Caco-2 (cell line): ENCODE measurements at regions of chr3 and their contacts with region 1.

Region 1: GRCh38 chr3:122383771-122384697 is at the start of gene FAM162A:
- DNase-seq: peak; percentile 95 to 97
- H3K4me3 ChIP-seq: peak within 1 kb of the TSS; percentile 77
- H3K4me3 Mint-ChIP-seq: peak within 1 kb of the TSS; percentile 97
- H3K27ac Mint-ChIP-seq: peak within 1 kb of the TSS; percentile 95
- H3K4me1 ChIP-seq: peaks cover 7% of the 10 kb centered on the region; the same call in 1 of the 2 replicates
- H3K4me1 Mint-ChIP-seq: no peaks in the 10 kb centered on the region
- H3K27me3 ChIP-seq: no peaks in the 10 kb centered on the region
- H3K27me3 Mint-ChIP-seq: no peaks in the 10 kb centered on the region
- CTCF ChIP-seq: peak; percentile 42 to 74
- total RNA-seq, gene FAM162A: 35.8 and 37.4 TPM in 2 replicates

Region 2: DNA sequence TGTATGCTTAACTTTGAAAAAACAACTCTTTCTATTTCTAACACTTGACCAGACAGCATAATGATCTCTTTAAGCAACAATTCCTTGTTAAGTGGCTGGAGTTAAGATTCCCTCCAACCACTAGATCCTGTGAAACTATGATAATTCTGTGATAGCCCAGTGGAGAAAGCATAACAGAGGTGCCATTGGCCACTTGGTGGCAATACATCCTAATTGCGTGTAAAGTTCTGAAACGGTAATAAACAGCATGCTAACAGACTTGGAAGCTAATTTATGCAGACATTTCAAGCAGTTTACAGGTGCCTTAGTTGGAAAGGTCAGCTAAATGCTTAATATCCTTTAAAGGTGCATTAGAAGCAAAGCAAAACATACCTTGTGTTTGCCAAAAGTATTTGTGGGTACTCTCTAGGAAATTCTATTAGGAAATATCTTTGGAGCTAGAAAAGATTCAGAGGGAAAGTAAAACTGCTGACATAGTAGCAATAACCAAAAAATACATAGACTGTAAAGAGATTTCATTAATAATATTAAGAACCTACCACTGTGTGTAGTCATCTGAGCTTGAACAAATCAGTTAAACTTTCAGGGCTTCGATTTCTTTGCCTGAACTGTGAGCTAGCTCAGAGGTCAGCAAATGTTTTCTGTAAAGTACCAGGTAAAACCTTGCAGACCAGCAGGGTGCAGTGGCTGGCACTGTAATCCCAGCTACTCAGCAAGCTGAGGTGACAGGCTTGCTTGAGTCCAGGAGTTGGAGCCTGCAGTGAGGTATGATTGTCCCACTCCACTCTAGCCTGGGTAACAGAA is 78.0 kb before region 1 on chr3:
- CTCF ChIA-PET with region 1: interaction called, 24 read pairs
- POLR2A ChIA-PET with region 1: interaction called, 6 read pairs
- intact Hi-C with region 1: loop called (anchors 1 kb)
- DNase-seq: peak; percentile 43 to 48
- H3K4me3 ChIP-seq: no peak overlapping the region
- H3K4me3 Mint-ChIP-seq: peak overlapping the region; percentile 19
- H3K27ac Mint-ChIP-seq: no peak overlapping the region
- H3K4me1 ChIP-seq: 0 out of 2 replicates have a peak, but pooled peaks cover 2% of the 10 kb centered on the region
- H3K4me1 Mint-ChIP-seq: no peaks in the 10 kb centered on the region
- H3K27me3 ChIP-seq: no peaks in the 10 kb centered on the region
- H3K27me3 Mint-ChIP-seq: no peaks in the 10 kb centered on the region
- CTCF ChIP-seq: peak in 1 of 2 experiments; percentile 54

Region 3: DNA sequence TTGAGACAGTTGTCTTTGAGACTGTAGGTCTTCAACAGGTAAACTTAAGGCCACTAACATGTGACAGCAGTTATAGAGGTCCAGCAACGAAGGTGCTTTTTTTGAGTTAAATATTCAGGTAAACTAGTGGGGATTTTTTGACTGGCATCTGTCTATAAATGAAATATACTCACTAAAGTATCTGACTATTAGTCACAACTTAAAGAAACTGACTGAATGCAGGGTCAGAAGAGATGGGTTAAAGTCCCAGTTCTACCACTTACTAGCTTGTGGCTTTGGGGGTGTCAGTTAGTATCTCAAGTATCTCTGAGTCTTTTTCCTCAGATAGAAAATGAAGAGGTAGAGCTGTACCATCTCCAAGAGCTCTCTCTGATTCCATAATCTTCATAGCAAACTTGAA is 19.0 kb before region 1 on chr3:
- CTCF ChIA-PET with region 1: interaction called, 4 read pairs
- POLR2A ChIA-PET with region 1: interaction called, 6 read pairs
- intact Hi-C with region 1: loop called (anchors 1 kb)
- DNase-seq: no peak
- H3K4me3 ChIP-seq: no peak overlapping the region
- H3K4me3 Mint-ChIP-seq: peak overlapping the region; percentile 48
- H3K27ac Mint-ChIP-seq: peak overlapping the region; percentile 76
- H3K4me1 ChIP-seq: peaks cover 49% of the 10 kb centered on the region
- H3K4me1 Mint-ChIP-seq: peaks cover 28% of the 10 kb centered on the region
- H3K27me3 ChIP-seq: no peaks in the 10 kb centered on the region
- H3K27me3 Mint-ChIP-seq: no peaks in the 10 kb centered on the region
- CTCF ChIP-seq: no peak

Region 4: GRCh38 chr3:122415720-122416654 is 32.0 kb after region 1 on chr3 and contains the start of gene WDR5B:
- CTCF ChIA-PET with region 1: interaction called, 8 read pairs
- POLR2A ChIA-PET with region 1: interaction called, 19 read pairs
- intact Hi-C with region 1: loop called (anchors 2 kb)
- DNase-seq: peak; percentile 97
- H3K4me3 ChIP-seq: peak within 1 kb of the TSS; percentile 71
- H3K4me3 Mint-ChIP-seq: peak within 1 kb of the TSS; percentile 96
- H3K27ac Mint-ChIP-seq: peak within 1 kb of the TSS; percentile 94
- H3K4me1 ChIP-seq: no peaks in the 10 kb centered on the region; the same call in 1 of the 2 replicates
- H3K4me1 Mint-ChIP-seq: peaks cover 12% of the 10 kb centered on the region
- H3K27me3 ChIP-seq: no peaks in the 10 kb centered on the region
- H3K27me3 Mint-ChIP-seq: no peaks in the 10 kb centered on the region
- CTCF ChIP-seq: no peak
- total RNA-seq, gene WDR5B: 4.4 and 4.7 TPM in 2 replicates